ENCODE measurements at regions of chr10 and their contacts with region 1.

Region 1: GRCh38 chr10:109894516-109894915 is 28.8 kb downstream of the XPNPEP1 start:
- DNase-seq: no peak

Region 2: GRCh38 chr10:109966961-109967738 is 72.6 kb after region 1 on chr10:
- intact Hi-C with region 1: loop called (anchors 5 kb)
- DNase-seq: no peak

Region 3: GRCh38 chr10:110076559-110077318 is 182.2 kb after region 1 on chr10:
- intact Hi-C with region 1: loop called (anchors 5 kb)
- DNase-seq: no peak

Region 4: GRCh38 chr10:110210674-110211464 is 316.4 kb after region 1 on chr10:
- intact Hi-C with region 1: loop called (anchors 5 kb)
- DNase-seq: peak; percentile 99

Region 5: DNA sequence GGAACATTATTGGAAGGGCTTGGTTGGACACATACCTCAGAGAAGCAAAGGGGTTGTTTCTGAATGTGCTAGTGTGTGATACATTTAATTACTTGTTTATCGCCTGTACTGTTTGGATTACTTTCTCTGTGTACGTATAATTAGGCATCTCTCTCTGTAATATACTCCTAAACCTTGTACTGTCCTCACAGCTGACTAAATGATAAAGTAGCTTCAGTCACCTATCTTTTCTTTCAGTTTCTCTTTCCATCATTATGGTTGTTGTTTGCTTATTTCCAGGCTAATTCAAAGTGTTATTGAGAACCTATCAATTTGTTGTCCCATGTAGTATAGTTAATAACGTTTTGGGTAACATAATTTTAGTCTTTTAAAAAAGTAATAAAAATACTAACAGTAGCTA is 346.9 kb after region 1 on chr10:
- intact Hi-C with region 1: no loop called
- DNase-seq: no peak